Esophagus muscularis mucosa (tissue), 4 donors: ENCODE measurements at regions of chr16 and their contacts with region 1.

Region 1: DNA sequence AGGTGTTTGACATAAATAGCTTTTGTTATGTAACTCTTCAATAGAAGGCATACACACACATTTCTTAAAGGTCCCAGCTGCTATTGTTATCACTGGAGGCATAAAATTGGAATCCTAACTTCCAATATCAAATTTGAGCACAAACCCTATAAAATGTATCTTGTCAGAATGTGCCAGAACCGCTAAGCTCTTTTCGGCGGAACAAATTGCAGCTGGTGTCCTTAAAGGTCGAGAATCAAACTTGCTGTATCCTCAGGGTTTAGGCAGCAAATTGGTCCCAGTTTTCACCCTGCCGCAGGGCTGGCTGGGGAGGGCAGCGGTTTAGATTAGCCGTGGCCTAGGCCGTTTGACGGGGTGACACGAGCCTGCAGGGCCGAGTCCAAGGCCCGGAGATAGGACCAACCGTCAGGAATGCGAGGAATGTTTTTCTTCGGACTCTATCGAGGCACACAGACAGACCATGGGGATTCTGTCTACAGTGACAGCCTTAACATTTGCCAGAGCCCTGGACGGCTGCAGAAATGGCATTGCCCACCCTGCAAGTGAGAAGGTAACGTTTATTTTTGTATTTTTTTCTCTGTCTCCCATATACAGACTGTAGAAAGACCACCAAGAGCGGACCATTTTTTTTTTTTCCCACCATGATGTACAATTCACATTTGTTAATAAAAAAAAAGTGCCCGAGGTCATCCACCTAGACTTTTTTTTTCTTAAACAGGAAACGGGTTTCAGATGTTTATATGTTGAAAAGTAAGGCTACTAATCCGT is 297.1 kb downstream of the IRF8 start:
- DNase-seq: no peak
- H3K4me3 ChIP-seq: peak overlapping the region; percentile 15 to 55 (median 28)
- H3K27ac ChIP-seq: peak overlapping the region; percentile 79 to 94 (median 90)
- H3K4me1 ChIP-seq: peaks cover 0 to 40% (median 35%) of the 10 kb centered on the region in 4 donors
- H3K27me3 ChIP-seq: peaks cover 0 to 22% (median 0%) of the 10 kb centered on the region in 4 donors
- CTCF ChIP-seq: no peak
- EP300 ChIP-seq: no peak
- POLR2A ChIP-seq: no peak

Region 2: DNA sequence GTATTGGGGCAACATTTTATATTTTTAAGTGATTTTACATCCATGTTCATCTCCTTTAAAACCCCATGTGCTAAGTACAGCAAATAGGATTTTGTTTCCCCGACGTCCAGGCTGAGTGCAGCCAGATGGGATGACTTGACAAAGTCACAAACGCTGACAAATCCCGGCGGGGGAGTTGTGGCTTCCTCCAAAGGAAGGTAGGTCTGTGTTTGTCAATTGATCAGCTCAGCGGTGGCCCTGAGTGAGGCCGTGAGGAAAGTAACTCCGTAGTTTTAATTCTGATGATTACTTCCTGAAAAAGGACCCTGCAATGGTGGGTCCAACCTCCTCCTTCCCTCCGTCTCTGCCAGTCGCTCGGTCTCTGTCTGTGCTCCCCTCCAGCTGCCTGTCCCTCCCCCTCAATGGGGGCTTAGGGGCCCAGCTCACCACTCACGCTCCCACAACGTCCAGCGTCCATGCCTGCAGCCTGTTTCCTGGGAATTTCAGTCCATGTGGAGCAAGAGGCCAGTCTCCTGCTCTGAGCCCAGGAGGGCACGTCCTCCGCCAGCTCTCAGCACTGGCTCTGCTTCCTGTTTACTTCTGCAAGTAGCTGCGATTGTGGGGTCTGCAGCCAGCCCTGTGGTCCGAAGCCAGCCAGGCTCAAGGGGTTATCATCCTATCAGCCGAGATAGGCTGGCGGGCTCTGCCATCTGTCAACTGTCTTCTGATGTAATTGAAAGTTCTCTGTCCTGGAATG is 104.9 kb after region 1 on chr16:
- intact Hi-C with region 1: loop called (anchors 10 kb)
- DNase-seq: no peak
- H3K4me3 ChIP-seq: peak overlapping the region in 2 of 4 donors; percentile 19 to 24
- H3K27ac ChIP-seq: peak overlapping the region in 1 of 4 donors; percentile 22
- H3K4me1 ChIP-seq: peaks cover 3 to 51% (median 39%) of the 10 kb centered on the region in 4 donors
- H3K27me3 ChIP-seq: no peaks in the 10 kb centered on the region
- CTCF ChIP-seq: no peak
- EP300 ChIP-seq: no peak
- POLR2A ChIP-seq: no peak

Region 3: GRCh38 chr16:86509759-86510464 is 313.9 kb after region 1 on chr16:
- intact Hi-C with region 1: loop called (anchors 5 kb)
- DNase-seq: peak; percentile 94
- H3K4me3 ChIP-seq: peak overlapping the region; percentile 81 to 91 (median 84)
- H3K27ac ChIP-seq: peak overlapping the region; percentile 95 to 100 (median 98)
- H3K4me1 ChIP-seq: peaks cover 39 to 50% (median 44%) of the 10 kb centered on the region in 4 donors
- H3K27me3 ChIP-seq: peaks cover 0 to 72% (median 0%) of the 10 kb centered on the region in 4 donors
- CTCF ChIP-seq: peak in 2 of 3 experiments; percentile 10 to 23
- EP300 ChIP-seq: no peak
- POLR2A ChIP-seq: peak; percentile 58